Uterus (tissue), 4 donors: ENCODE measurements at regions of chr19 and their contacts with region 1.

Region 1: GRCh38 chr19:46404055-46404752 is 9.2 kb downstream of the CCDC8 start:
- DNase-seq: peak; percentile 59 to 74
- H3K4me3 ChIP-seq: peak overlapping the region; percentile 33 to 41
- H3K27ac ChIP-seq: peak overlapping the region; percentile 70 to 84
- H3K4me1 ChIP-seq: peaks cover 0 to 6% of the 10 kb centered on the region in 2 donors
- H3K27me3 ChIP-seq: no peaks in the 10 kb centered on the region
- CTCF ChIP-seq: peak in 1 of 4 experiments; percentile 8
- POLR2A ChIP-seq: peak in 1 of 2 donors; percentile 23

Region 2: DNA sequence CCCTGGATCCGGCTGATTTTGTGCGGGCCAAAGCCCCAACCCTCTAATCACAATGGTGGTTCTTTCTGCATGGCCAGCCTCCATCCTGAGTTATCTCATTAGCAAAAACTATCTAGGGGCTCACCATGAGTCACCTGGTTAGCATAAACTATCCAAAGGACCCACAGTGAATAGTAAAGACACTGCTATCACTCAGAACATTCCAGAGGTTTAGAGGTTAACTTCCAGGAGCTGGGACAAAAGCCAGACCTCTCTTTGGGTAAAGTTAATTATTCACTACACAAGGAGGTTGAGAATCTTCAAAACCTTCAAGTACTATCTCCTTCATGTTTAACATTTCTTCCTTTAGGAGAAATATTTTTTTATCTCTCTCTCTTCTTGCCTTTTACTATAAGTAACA is 76.1 kb before region 1 on chr19:
- intact Hi-C with region 1: no loop called
- DNase-seq: no peak
- H3K4me3 ChIP-seq: no peak overlapping the region
- H3K27ac ChIP-seq: no peak overlapping the region
- H3K4me1 ChIP-seq: no peaks in the 10 kb centered on the region
- H3K27me3 ChIP-seq: no peaks in the 10 kb centered on the region
- CTCF ChIP-seq: no peak
- POLR2A ChIP-seq: no peak

Region 3: GRCh38 chr19:46487802-46488445 is 83.7 kb after region 1 on chr19:
- intact Hi-C with region 1: loop called (anchors 5 kb)
- DNase-seq: peak; percentile 82 to 88
- H3K4me3 ChIP-seq: peak overlapping the region; percentile 22 to 29
- H3K27ac ChIP-seq: peak overlapping the region in 1 of 2 donors; percentile 64
- H3K4me1 ChIP-seq: peaks cover 0 to 11% of the 10 kb centered on the region in 2 donors
- H3K27me3 ChIP-seq: no peaks in the 10 kb centered on the region
- CTCF ChIP-seq: peak; percentile 97 to 99 (median 98)
- POLR2A ChIP-seq: no peak